K562 (cell line): ENCODE measurements at regions of chr19 and their contacts with region 1.

Region 1: DNA sequence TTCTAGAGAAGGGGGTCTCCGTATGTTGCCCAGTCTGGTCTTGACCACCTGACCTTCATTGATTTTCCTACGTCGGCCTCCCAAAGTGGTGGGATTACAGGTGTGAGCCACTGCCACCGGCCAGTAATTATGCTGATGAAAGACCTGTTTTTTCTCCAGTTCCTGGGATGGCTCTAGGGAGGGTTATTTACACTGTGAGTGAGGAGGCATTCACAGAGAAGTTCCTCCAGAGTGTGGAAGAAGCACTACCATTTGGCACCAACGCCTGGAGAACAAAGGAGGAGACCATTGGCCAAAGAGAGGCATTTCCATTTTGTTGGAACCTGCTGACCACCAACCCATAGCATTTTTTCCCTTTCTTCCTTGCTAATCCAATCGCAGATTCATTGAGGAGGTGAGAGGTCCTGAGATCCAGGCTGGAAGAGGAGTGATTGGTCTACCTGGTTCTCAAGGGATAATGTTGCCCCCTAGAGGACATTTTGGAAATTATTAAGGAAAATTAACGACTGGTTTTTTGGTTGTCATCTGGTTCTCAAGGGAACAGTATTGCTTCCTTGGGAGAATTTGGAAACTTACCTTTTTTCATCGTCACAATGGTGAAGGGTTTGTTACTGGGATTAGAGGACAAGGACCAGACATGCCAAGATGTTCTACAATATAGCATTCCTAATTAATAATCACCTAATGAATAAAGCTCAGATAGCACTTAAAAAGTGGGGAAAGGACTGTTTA is 5.5 kb upstream of the SAE1 start:
- DNase-seq: peak; percentile 68 to 78 (median 70)
- ATAC-seq: peak; percentile 85
- H3K4me3 ChIP-seq: no peak overlapping the region
- H3K27ac ChIP-seq: no peak overlapping the region
- H3K4me1 ChIP-seq: peaks cover 0 to 10% of the 10 kb centered on the region in 2 experiments; a peak in 3 of 5 replicates
- H3K27me3 ChIP-seq: no peaks in the 10 kb centered on the region
- CTCF ChIP-seq: peak; percentile 68 to 88 (median 74)
- EP300 ChIP-seq: no peak
- POLR2A ChIP-seq: no peak
- RAD21 ChIP-seq: peak; percentile 83 to 92

Region 2: GRCh38 chr19:46850228-46851203 is 274.6 kb before region 1 on chr19 and contains the start of gene AP2S1:
- CTCF ChIA-PET with region 1: no interaction called
- POLR2A ChIA-PET with region 1: no interaction called
- in situ Hi-C with region 1: loop called (anchors 10 kb)
- intact Hi-C with region 1: loop called (anchors 5 kb)
- DNase-seq: peak; percentile 87 to 97 (median 91)
- ATAC-seq: peak; percentile 95
- H3K4me3 ChIP-seq: peak within 1 kb of the TSS; percentile 92
- H3K27ac ChIP-seq: peak within 1 kb of the TSS; percentile 88
- H3K4me1 ChIP-seq: peaks cover 14 to 29% of the 10 kb centered on the region in 2 experiments
- H3K27me3 ChIP-seq: no peaks in the 10 kb centered on the region
- CTCF ChIP-seq: no peak; a peak in 1 of 6 replicates
- EP300 ChIP-seq: no peak
- POLR2A ChIP-seq: peak; percentile 82
- RAD21 ChIP-seq: no peak
- polyA plus RNA-seq, gene AP2S1: 32.4 to 72.0 TPM

Region 3: GRCh38 chr19:46984077-46985010 is 140.8 kb before region 1 on chr19:
- CTCF ChIA-PET with region 1: no interaction called
- POLR2A ChIA-PET with region 1: no interaction called
- in situ Hi-C with region 1: no loop called
- intact Hi-C with region 1: no loop called
- DNase-seq: no peak
- ATAC-seq: no peak
- H3K4me3 ChIP-seq: no peak overlapping the region
- H3K27ac ChIP-seq: no peak overlapping the region
- H3K4me1 ChIP-seq: peaks cover 0 to 10% of the 10 kb centered on the region in 2 experiments; a peak in 2 of 5 replicates
- H3K27me3 ChIP-seq: no peaks in the 10 kb centered on the region
- CTCF ChIP-seq: no peak
- EP300 ChIP-seq: no peak
- POLR2A ChIP-seq: no peak
- RAD21 ChIP-seq: no peak

Region 4: GRCh38 chr19:47013041-47013517 is 112.0 kb before region 1 on chr19:
- CTCF ChIA-PET with region 1: interaction called, 14 read pairs
- POLR2A ChIA-PET with region 1: no interaction called
- in situ Hi-C with region 1: no loop called
- intact Hi-C with region 1: loop called (anchors 1 kb)
- DNase-seq: peak; percentile 81 to 87 (median 83)
- ATAC-seq: peak; percentile 98
- H3K4me3 ChIP-seq: no peak overlapping the region
- H3K27ac ChIP-seq: no peak overlapping the region
- H3K4me1 ChIP-seq: peaks cover 3 to 9% of the 10 kb centered on the region in 2 experiments; a peak in 3 of 5 replicates
- H3K27me3 ChIP-seq: no peaks in the 10 kb centered on the region
- CTCF ChIP-seq: peak; percentile 94 to 98 (median 97)
- EP300 ChIP-seq: no peak
- POLR2A ChIP-seq: no peak
- RAD21 ChIP-seq: peak; percentile 91 to 96

Region 5: DNA sequence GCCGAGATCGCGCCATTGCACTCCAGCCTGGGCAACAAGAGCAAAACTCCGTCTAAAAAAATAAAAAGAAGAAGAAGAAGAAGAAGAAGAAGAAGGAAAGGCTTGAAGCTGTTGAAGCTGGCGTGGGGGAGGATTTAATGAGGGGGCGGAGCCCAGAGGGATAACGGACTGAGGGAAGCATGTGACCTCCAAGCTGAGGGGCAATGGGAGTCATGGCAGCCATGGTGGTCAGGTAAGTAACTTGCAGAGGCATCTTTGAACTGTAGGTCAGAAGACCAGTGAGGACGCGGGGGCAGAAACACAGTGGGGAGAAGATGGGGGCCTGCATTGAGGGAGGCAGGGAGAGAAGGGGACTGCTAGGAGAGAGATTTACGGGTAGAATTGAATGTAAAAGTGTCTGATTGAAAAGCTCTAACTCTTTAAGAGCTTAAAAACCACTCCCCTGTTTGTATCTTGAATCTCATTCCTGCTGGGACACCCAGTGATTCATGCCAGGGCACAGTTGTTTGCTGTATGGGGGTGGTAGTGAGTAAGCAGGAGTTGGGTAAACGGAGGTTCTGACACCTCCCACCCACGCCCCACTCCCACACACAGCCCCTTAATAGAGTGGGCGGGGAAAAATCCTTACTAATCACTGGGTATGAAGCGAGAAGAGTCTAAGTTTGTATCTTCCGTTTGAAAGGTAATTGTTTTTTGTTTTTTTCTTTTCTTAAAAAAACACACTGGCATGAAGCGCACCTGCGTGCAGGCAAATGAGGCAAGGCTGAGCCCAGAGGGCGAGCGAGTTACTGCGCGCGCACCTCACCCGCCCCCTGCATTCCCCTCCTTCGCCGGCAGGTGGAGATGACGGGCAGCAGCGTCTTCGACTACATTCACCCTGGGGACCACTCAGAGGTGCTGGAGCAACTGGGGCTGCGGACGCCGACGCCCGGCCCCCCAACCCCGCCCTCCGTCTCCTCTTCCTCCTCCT is 89.7 kb before region 1 on chr19:
- CTCF ChIA-PET with region 1: no interaction called
- POLR2A ChIA-PET with region 1: interaction called, 3 read pairs
- in situ Hi-C with region 1: no loop called
- intact Hi-C with region 1: loop called (anchors 1 kb)
- DNase-seq: peak; percentile 93 to 97 (median 95)
- ATAC-seq: peak; percentile 93
- H3K4me3 ChIP-seq: peak overlapping the region; percentile 47
- H3K27ac ChIP-seq: peak overlapping the region; percentile 68
- H3K4me1 ChIP-seq: peaks cover 0 to 32% of the 10 kb centered on the region in 2 experiments; a peak in 2 of 5 replicates
- H3K27me3 ChIP-seq: no peaks in the 10 kb centered on the region
- CTCF ChIP-seq: peak; percentile 91 to 93 (median 93)
- EP300 ChIP-seq: peak; percentile 3; the same call in 1 of the 2 replicates
- POLR2A ChIP-seq: 0 out of 2 replicates have a peak, but pooled peaks have one; percentile 31
- RAD21 ChIP-seq: peak; percentile 48 to 65

Region 6: DNA sequence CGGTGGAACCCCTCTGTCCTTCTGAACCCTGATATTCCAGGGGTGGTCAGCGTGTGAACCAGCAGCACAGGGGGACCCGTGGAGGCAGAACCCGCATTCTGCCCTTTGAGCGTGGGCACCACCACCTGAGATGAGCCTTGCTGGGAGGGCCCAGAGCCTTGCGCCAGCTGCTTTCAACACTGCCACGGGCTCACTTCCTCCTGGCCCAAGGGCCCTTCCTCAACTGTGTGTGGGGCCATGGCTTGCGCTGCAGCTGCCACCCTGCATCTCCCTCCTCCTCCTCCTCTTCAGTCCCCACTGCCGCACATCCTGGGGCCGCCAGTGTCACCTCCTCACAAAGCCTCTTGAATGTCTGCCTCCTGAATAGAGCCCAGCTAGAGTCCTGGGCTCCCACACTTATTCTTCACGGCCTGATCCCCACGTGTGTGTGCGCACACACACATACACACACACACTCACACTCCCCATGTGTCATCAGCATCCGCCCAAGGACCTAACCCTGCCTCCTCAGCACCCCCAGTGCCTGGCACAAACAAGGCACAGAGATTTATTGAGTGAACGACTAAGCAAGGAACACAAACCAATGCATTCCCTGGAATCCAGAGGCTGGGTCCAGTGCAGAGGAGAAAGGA is 49.8 kb before region 1 on chr19:
- CTCF ChIA-PET with region 1: interaction called, 35 read pairs
- POLR2A ChIA-PET with region 1: no interaction called
- in situ Hi-C with region 1: loop called (anchors 5 kb)
- intact Hi-C with region 1: loop called (anchors 1 kb)
- DNase-seq: no peak
- ATAC-seq: no peak
- H3K4me3 ChIP-seq: no peak overlapping the region
- H3K27ac ChIP-seq: no peak overlapping the region
- H3K4me1 ChIP-seq: peaks cover 0 to 8% of the 10 kb centered on the region in 2 experiments; a peak in 2 of 5 replicates
- H3K27me3 ChIP-seq: no peaks in the 10 kb centered on the region
- CTCF ChIP-seq: no peak
- EP300 ChIP-seq: no peak
- POLR2A ChIP-seq: no peak
- RAD21 ChIP-seq: no peak

Region 7: DNA sequence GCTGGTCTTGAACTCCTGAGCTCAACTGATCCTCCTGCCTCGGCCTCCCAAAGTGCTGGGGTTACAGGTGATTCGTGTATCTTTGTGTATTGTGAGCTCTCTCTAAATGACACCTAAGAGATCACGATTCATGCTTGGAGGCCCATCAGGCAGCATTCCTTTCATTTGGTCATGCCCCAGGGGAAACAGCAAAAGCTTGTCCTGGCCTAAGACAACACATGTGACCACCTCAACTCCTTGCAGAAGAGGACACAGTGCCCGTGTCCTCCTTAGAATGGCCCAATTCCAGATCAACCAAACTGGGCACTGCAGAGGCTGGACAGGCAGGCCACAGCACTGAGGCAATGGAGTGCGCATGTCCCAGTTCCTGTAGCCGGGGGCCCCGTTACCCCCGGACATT is 44.0 kb before region 1 on chr19:
- CTCF ChIA-PET with region 1: interaction called, 35 read pairs
- POLR2A ChIA-PET with region 1: no interaction called
- in situ Hi-C with region 1: loop called (anchors 5 kb)
- intact Hi-C with region 1: loop called (anchors 1 kb)
- DNase-seq: no peak
- ATAC-seq: no peak
- H3K4me3 ChIP-seq: no peak overlapping the region
- H3K27ac ChIP-seq: no peak overlapping the region
- H3K4me1 ChIP-seq: no peaks in the 10 kb centered on the region; a peak in 1 of 5 replicates
- H3K27me3 ChIP-seq: no peaks in the 10 kb centered on the region
- CTCF ChIP-seq: no peak
- EP300 ChIP-seq: no peak
- POLR2A ChIP-seq: no peak
- RAD21 ChIP-seq: no peak

Region 8: GRCh38 chr19:47381653-47382279 is 256.7 kb after region 1 on chr19:
- CTCF ChIA-PET with region 1: no interaction called
- POLR2A ChIA-PET with region 1: no interaction called
- in situ Hi-C with region 1: no loop called
- intact Hi-C with region 1: no loop called
- DNase-seq: no peak
- ATAC-seq: no peak; the same call in 2 of the 3 replicates
- H3K4me3 ChIP-seq: no peak overlapping the region
- H3K27ac ChIP-seq: no peak overlapping the region
- H3K4me1 ChIP-seq: peaks cover 7 to 22% of the 10 kb centered on the region in 2 experiments; a peak in 4 of 5 replicates
- H3K27me3 ChIP-seq: peaks cover 2 to 8% of the 10 kb centered on the region in 2 experiments; a peak in 3 of 5 replicates
- CTCF ChIP-seq: no peak
- EP300 ChIP-seq: no peak
- POLR2A ChIP-seq: no peak
- RAD21 ChIP-seq: no peak